ENCODE measurements at regions of chr9 and their contacts with region 1.

Region 1: GRCh38 chr9:12723409-12724028 is 30.3 kb downstream of the TYRP1 start:
- DNase-seq: no peak
- H3K4me3 ChIP-seq: no peak overlapping the region
- H3K27ac ChIP-seq: no peak overlapping the region
- H3K4me1 ChIP-seq: no peaks in the 10 kb centered on the region
- H3K27me3 ChIP-seq: no peaks in the 10 kb centered on the region
- CTCF ChIP-seq: peak in 1 of 3 experiments; percentile 19
- POLR2A ChIP-seq: no peak

Region 2: GRCh38 chr9:12884737-12885414 is 161.4 kb after region 1 on chr9:
- intact Hi-C with region 1: loop called (anchors 5 kb)
- DNase-seq: no peak
- H3K4me3 ChIP-seq: no peak overlapping the region
- H3K27ac ChIP-seq: no peak overlapping the region
- H3K4me1 ChIP-seq: no peaks in the 10 kb centered on the region
- H3K27me3 ChIP-seq: no peaks in the 10 kb centered on the region
- CTCF ChIP-seq: no peak
- POLR2A ChIP-seq: no peak

Region 3: GRCh38 chr9:12923468-12924009 is 200.0 kb after region 1 on chr9:
- intact Hi-C with region 1: no loop called
- DNase-seq: no peak
- H3K4me3 ChIP-seq: no peak overlapping the region
- H3K27ac ChIP-seq: no peak overlapping the region
- H3K4me1 ChIP-seq: no peaks in the 10 kb centered on the region
- H3K27me3 ChIP-seq: no peaks in the 10 kb centered on the region
- CTCF ChIP-seq: no peak
- POLR2A ChIP-seq: no peak

Measured in testis (tissue), 5 donors.